Activated B cell treated with CpG ODN at 0.5 μM for 24 hours (primary cell): ENCODE measurements at regions of chr13 and their contacts with region 1.

Region 1: DNA sequence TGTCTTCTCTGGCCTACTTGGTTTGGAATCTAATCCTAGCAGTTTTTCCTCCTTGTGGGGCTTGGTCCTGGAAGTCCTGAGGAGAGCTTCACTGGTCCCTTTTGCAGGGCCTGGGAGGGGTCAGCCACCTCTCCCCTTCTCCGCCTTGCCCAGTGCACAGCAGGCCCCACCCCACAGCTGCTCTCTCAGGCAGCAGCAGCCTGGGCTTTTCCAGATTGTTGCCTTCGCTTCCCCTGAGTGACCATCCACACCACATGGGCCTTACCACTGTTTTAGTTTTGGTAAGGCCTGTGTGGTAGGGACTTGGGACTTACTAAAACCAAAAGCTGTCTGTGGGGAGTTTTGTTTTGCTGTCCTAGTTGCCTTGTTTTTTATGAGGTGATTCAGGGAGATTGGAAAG is 11.5 kb downstream of the MPHOSPH8 start:
- DNase-seq: no peak
- ATAC-seq: no peak
- H3K4me3 Mint-ChIP-seq: no peak overlapping the region
- H3K27ac Mint-ChIP-seq: no peak overlapping the region
- H3K4me1 Mint-ChIP-seq: peaks cover 7% of the 10 kb centered on the region
- H3K27me3 Mint-ChIP-seq: no peaks in the 10 kb centered on the region
- CTCF ChIP-seq: no peak

Region 2: DNA sequence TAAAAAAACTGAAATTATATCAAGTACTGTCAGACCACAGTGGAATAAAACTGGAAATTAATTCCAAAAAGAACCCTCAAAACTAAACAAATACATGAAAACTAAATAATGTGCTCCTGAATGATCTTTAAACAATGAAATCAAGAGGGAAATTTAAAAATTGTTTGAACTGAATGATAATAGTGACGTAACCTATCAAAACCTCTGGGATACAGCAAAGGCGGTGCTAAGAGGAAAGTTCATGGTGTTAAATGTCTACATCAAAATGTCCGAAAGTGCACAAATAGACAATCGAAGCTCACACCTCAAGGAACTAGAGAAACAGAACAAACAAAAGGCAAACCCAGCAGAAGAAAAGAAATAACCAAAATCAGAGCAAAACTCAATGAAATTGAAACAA is 392.6 kb before region 1 on chr13:
- CTCF ChIA-PET with region 1: no interaction called
- POLR2A ChIA-PET with region 1: no interaction called
- intact Hi-C with region 1: no loop called
- DNase-seq: no peak
- ATAC-seq: no peak
- H3K4me3 Mint-ChIP-seq: no peak overlapping the region
- H3K27ac Mint-ChIP-seq: no peak overlapping the region
- H3K4me1 Mint-ChIP-seq: no peaks in the 10 kb centered on the region
- H3K27me3 Mint-ChIP-seq: no peaks in the 10 kb centered on the region
- CTCF ChIP-seq: no peak

Region 3: GRCh38 chr13:19329365-19329764 is 315.6 kb before region 1 on chr13:
- CTCF ChIA-PET with region 1: no interaction called
- POLR2A ChIA-PET with region 1: no interaction called
- intact Hi-C with region 1: no loop called
- DNase-seq: no peak
- ATAC-seq: no peak
- H3K4me3 Mint-ChIP-seq: no peak overlapping the region
- H3K27ac Mint-ChIP-seq: no peak overlapping the region
- H3K4me1 Mint-ChIP-seq: no peaks in the 10 kb centered on the region
- H3K27me3 Mint-ChIP-seq: no peaks in the 10 kb centered on the region
- CTCF ChIP-seq: no peak

Region 4: DNA sequence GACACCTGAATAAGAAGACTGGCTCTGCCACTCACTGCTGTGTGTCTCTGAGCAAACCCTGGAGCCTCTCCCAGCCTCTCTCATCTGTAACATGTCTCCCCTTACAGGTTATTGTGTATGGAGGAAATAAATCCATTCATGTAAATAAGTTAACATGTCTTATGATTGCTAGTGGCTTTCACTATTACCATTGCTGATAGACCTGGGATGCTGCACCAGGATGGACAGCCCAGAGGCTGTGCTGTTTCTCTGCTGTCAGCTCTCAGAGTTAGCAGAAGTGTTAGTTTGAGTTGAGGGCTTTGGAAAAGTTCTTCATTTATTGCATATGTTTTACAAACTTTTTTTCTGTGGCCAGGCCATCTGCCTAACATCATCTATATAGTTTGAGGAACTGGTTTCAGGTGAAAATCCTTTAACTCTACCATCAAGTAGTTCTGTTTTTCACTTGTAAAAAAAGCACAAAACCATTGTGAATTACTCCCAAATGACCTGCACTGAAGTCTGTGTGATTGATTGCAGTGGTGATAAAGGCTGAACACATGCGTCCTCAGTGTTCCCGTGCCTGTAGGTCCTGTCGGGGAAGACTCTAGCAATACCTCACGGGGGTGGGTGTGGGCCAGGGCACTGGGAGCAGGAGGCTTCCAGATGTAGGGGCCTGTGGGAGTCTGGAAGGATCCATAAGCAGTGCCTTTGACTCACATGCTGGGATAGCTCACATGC is 13.0 kb after region 1 on chr13:
- CTCF ChIA-PET with region 1: no interaction called
- POLR2A ChIA-PET with region 1: interaction called, 12 read pairs
- intact Hi-C with region 1: no loop called
- DNase-seq: no peak
- ATAC-seq: no peak
- H3K4me3 Mint-ChIP-seq: no peak overlapping the region
- H3K27ac Mint-ChIP-seq: peak overlapping the region; percentile 18
- H3K4me1 Mint-ChIP-seq: no peaks in the 10 kb centered on the region
- H3K27me3 Mint-ChIP-seq: no peaks in the 10 kb centered on the region
- CTCF ChIP-seq: no peak